ENCODE measurements at regions of chr6 and their contacts with region 1.

Region 1: DNA sequence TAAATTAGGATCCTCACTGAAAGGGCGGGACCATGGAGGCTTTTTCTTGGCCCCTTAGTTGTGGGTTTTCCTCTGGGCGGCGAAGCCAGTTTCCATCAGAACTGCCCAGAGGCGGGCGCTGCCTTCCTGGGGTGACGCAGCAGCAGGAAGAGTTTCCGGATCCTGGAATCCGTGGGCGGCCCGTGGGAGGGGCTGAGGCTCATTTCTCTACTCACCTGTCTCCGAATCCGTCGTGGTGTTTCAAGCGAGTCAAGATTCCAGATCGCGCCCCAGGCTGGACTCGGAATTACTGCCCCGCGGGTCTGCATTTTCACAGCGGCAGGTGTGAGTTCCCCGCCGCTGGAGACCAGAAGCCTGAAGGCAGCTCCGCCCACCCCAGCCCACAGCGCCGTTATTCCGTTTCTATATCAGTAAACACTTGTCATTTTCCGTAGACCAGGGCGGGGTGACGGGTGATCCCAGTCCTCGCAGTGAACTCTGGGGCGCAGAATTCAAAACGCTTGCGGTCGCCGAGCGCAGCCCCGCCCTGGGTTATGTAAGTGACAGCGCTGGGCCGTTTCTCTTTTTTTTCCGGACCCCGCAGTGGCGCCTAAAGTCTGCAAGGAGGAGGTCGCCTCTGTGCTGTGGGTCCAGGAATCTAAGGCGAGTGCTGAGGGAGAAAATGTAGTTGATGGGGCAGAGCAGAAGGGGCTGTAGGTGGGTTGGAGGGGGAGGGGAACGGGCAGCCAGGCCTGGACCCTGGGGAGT is 27.2 kb upstream of the POU5F1 start:
- DNase-seq: peak; percentile 93 to 99 (median 96)
- H3K4me3 ChIP-seq: peak overlapping the region; percentile 62 to 99
- H3K4me3 Mint-ChIP-seq: peak overlapping the region; percentile 87 to 96 (median 94)
- H3K27ac ChIP-seq: peak overlapping the region; percentile 96
- H3K27ac Mint-ChIP-seq: peak overlapping the region; percentile 93 to 100 (median 99)
- H3K4me1 ChIP-seq: peaks cover 47% of the 10 kb centered on the region
- H3K4me1 Mint-ChIP-seq: peaks cover 41 to 72% (median 53%) of the 10 kb centered on the region in 4 donors
- H3K27me3 ChIP-seq: no peaks in the 10 kb centered on the region
- H3K27me3 Mint-ChIP-seq: peaks cover 0 to 3% of the 10 kb centered on the region in 2 donors

Region 2: DNA sequence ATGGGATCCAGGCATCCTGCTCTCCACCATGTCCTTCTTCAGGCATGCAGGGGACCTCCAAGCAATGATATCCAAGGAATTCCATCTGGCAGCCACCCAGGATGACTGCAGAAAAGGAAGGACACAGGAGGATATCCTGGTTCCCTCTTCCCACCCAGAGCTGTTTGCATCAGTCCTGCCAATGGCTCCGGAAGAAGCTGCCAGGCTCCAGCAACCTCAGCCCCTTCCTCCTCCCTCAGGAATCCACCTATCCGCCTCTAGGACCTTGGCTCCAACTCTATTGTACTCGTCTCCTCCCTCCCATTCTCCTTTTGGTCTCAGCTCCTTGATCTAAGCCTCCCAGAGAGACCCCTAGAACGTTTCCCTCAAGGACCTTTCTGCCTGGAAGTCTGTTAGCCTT is 58.1 kb before region 1 on chr6:
- CTCF ChIA-PET with region 1: interaction called, 41 read pairs
- POLR2A ChIA-PET with region 1: interaction called, 13 read pairs
- intact Hi-C with region 1: loop called (anchors 1 kb)
- DNase-seq: no peak
- H3K4me3 ChIP-seq: no peak overlapping the region
- H3K4me3 Mint-ChIP-seq: no peak overlapping the region
- H3K27ac ChIP-seq: no peak overlapping the region
- H3K27ac Mint-ChIP-seq: peak overlapping the region in 2 of 7 donors; percentile 32 to 63
- H3K4me1 ChIP-seq: peaks cover 5% of the 10 kb centered on the region
- H3K4me1 Mint-ChIP-seq: peaks cover 3 to 11% (median 5%) of the 10 kb centered on the region in 4 donors
- H3K27me3 ChIP-seq: no peaks in the 10 kb centered on the region
- H3K27me3 Mint-ChIP-seq: peaks cover 0 to 2% of the 10 kb centered on the region in 2 donors

Region 3: DNA sequence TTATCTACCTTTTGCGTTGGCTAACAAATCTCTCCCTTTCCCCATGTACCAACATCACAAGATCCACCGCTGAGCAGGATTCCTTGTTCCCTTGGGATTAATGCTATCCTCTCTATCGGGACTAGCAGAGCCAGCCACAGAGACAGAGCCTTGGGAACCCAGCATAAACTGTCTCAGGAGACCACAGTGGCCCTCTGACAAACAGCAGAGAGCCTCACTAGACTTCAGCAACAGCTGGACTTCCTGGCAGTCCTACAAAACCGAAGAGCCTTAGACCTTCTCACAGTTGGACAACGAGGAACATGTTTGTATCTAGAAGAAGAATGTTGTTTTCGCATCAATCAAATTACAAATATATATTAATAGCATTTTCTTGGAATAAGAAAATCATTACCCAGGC is 12.4 kb after region 1 on chr6:
- CTCF ChIA-PET with region 1: interaction called, 4 read pairs
- POLR2A ChIA-PET with region 1: interaction called, 43 read pairs
- intact Hi-C with region 1: no loop called
- DNase-seq: no peak
- H3K4me3 ChIP-seq: no peak overlapping the region
- H3K4me3 Mint-ChIP-seq: no peak overlapping the region
- H3K27ac ChIP-seq: no peak overlapping the region
- H3K27ac Mint-ChIP-seq: peak overlapping the region in 1 of 7 donors; percentile 80
- H3K4me1 ChIP-seq: peaks cover under 1% of the 10 kb centered on the region
- H3K4me1 Mint-ChIP-seq: peaks cover 7 to 10% (median 8%) of the 10 kb centered on the region in 4 donors
- H3K27me3 ChIP-seq: no peaks in the 10 kb centered on the region
- H3K27me3 Mint-ChIP-seq: no peaks in the 10 kb centered on the region

Region 4: DNA sequence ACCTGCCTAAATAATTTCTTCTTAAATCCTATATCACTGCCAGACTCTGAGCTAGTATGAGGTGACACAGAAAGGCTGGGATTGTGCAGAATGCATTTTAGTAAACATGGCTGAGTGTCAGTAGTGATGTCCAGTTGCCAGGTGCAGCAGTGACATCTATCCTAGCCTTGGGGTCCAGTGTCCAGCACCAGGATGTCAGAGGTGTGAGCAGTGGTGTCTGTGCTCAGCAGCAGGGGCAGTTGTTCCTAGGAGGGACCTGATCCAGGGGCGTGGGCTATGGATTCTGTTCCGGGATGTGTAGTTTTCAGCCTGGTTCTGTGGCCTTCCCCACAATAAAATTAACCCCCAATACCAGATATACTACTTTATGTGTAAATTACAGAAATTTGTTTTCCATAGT is 68.2 kb after region 1 on chr6:
- CTCF ChIA-PET with region 1: no interaction called
- POLR2A ChIA-PET with region 1: interaction called, 80 read pairs
- intact Hi-C with region 1: no loop called
- DNase-seq: no peak
- H3K4me3 ChIP-seq: no peak overlapping the region
- H3K4me3 Mint-ChIP-seq: peak overlapping the region in 1 of 8 donors; percentile 66
- H3K27ac ChIP-seq: no peak overlapping the region
- H3K27ac Mint-ChIP-seq: peak overlapping the region in 4 of 7 donors; percentile 37 to 100 (median 63)
- H3K4me1 ChIP-seq: peaks cover 33% of the 10 kb centered on the region
- H3K4me1 Mint-ChIP-seq: peaks cover 25 to 61% (median 45%) of the 10 kb centered on the region in 4 donors
- H3K27me3 ChIP-seq: no peaks in the 10 kb centered on the region
- H3K27me3 Mint-ChIP-seq: no peaks in the 10 kb centered on the region

Region 5: DNA sequence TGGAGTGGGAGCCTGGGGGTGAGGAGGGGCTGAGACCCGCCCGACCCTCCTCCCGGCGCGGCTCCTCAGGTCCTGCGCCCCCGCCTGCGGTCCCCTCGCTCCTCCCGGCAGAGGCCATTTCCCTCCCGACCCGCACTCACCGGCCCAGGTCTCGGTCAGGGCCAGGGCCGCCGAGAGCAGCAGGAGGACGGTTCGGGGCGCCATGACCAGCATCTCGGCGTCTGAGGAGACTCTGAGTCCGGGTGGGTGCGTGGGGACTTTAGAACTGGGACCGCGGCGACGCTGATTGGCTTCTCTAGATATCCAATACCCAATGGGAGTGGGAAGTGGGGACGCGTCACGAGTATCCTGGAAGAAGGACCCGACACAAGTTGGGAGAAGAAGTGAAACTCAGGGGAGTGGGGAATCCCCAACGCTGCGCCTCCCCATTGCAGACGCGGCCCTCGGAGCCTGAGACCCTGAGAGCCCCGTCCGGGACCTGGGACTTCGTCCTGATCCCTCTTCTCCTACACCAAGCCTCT is 159.3 kb after region 1 on chr6 and contains the start of gene HLA-B:
- CTCF ChIA-PET with region 1: interaction called, 14 read pairs
- POLR2A ChIA-PET with region 1: interaction called, 517 read pairs
- intact Hi-C with region 1: loop called (anchors 1 kb)
- DNase-seq: peak; percentile 82 to 93 (median 85)
- H3K4me3 ChIP-seq: peak within 1 kb of the TSS; percentile 68 to 86
- H3K4me3 Mint-ChIP-seq: peak within 1 kb of the TSS; percentile 97 to 99 (median 99)
- H3K27ac ChIP-seq: peak within 1 kb of the TSS; percentile 99
- H3K27ac Mint-ChIP-seq: peak within 1 kb of the TSS; percentile 100
- H3K4me1 ChIP-seq: peaks cover 59% of the 10 kb centered on the region
- H3K4me1 Mint-ChIP-seq: peaks cover 44 to 82% (median 55%) of the 10 kb centered on the region in 4 donors
- H3K27me3 ChIP-seq: no peaks in the 10 kb centered on the region
- H3K27me3 Mint-ChIP-seq: peaks cover 1% of the 10 kb centered on the region in 2 donors
- total RNA-seq, gene HLA-B: 5,565 to 5,762 TPM

Region 6: GRCh38 chr6:31619805-31620585 is 422.3 kb after region 1 on chr6:
- CTCF ChIA-PET with region 1: no interaction called
- POLR2A ChIA-PET with region 1: no interaction called
- intact Hi-C with region 1: loop called (anchors 1 kb)
- DNase-seq: peak; percentile 96 to 98 (median 98)
- H3K4me3 ChIP-seq: peak overlapping the region in 1 of 2 donors; percentile 93
- H3K4me3 Mint-ChIP-seq: peak overlapping the region; percentile 89 to 98 (median 93)
- H3K27ac ChIP-seq: peak overlapping the region; percentile 99
- H3K27ac Mint-ChIP-seq: peak overlapping the region; percentile 91 to 99 (median 98)
- H3K4me1 ChIP-seq: peaks cover 34% of the 10 kb centered on the region
- H3K4me1 Mint-ChIP-seq: peaks cover 21 to 49% (median 39%) of the 10 kb centered on the region in 4 donors
- H3K27me3 ChIP-seq: no peaks in the 10 kb centered on the region
- H3K27me3 Mint-ChIP-seq: no peaks in the 10 kb centered on the region